Mammary epithelial cell (primary cell): ENCODE measurements at regions of chr22 and their contacts with region 1.

Region 1: GRCh38 chr22:24994070-24994763 is 41.7 kb downstream of the KIAA1671 start:
- DNase-seq: peak; percentile 97
- H3K4me3 ChIP-seq: no peak overlapping the region
- H3K27ac ChIP-seq: peak overlapping the region; percentile 85
- H3K4me1 ChIP-seq: peaks cover 68% of the 10 kb centered on the region
- H3K27me3 ChIP-seq: no peaks in the 10 kb centered on the region
- CTCF ChIP-seq: peak; percentile 26 to 68

Region 2: DNA sequence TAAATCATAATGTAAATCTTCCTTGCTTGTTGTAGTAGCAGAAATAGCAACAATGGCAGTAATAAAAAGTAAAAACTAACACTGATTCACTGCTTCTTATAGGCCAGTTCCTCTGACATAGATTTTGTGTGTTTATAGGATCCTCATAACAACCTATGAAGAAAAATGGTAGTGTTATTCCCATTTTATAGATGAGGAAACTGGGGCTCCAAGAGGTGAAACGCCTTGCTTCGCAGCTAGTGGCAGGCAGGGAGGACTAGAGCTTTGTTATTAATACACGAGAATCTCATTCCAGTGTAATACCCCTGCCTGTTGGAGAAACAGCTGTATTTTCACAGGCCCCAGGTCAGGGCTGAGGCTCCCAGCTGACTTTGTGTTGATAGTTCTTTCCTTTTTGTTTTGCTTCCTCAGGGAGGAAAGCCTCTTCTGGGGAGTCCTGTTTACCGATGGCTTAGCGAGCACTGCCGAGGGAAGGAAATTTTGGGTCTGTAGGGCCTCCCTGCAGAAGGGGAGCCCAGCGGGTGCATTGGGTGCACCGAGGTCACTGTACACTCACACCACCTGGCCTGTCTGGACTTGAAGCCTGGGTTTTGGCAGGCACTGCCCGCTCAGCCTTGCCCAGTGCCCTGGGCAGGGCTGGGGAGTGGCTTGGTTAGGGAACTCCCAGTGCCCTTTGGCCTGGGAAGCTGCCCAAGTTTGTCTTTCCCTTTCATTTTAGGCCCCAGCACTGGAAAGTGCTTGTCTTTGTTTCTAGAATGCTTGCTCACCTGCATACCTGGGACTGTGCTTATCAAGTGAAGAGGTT is 28.2 kb before region 1 on chr22:
- CTCF ChIA-PET with region 1: no interaction called
- dilution Hi-C with region 1: no loop called
- in situ Hi-C with region 1: no loop called
- intact Hi-C with region 1: loop called (anchors 1 kb)
- DNase-seq: peak; percentile 92
- H3K4me3 ChIP-seq: peak overlapping the region in 1 of 3 experiments; percentile 6
- H3K27ac ChIP-seq: peak overlapping the region; percentile 54
- H3K4me1 ChIP-seq: peaks cover 59% of the 10 kb centered on the region
- H3K27me3 ChIP-seq: no peaks in the 10 kb centered on the region
- CTCF ChIP-seq: no peak

Region 3: DNA sequence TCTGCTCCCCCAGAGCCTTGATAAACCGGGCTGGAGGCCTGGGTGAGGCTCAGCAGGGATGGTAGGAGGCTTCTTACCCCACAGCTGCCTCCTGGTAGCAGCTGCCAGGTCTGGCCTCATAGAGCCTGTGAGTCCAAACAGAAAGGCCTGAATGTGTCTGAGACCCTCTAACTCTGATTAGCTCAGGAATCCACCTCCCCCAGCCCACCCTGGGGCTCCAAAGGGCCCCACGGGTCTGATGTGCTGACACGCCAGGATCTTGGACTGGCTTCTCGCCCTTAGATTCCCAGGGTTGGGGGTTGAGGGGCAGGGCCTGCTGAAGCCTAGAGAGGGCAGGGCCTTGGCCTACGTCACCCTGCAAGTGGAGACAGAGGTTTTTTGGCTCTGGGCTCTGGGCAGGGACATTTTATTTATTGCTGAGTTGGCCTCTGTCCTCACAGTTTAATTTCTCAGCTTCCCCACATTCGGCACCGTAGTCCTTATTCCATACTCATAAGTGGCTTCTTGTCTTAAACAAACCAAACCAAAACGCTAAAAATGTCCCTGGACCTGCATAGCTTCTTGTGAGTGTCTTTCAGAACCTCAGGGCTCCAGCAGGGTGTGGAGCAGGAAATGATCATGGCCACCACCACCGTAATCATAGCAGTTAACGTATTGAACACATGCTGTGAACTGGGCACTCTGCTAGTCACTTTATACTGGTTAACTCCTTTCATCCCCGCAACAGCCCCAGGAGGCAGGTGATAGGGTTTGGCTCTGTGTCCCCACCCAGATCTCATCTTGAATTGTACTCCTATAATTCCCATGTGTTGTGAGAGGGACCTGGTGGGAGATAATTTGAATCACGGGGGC is 16.6 kb before region 1 on chr22:
- CTCF ChIA-PET with region 1: no interaction called
- dilution Hi-C with region 1: no loop called
- in situ Hi-C with region 1: no loop called
- intact Hi-C with region 1: loop called (anchors 2 kb)
- DNase-seq: no peak
- H3K4me3 ChIP-seq: no peak overlapping the region
- H3K27ac ChIP-seq: peak overlapping the region; percentile 89
- H3K4me1 ChIP-seq: peaks cover 38% of the 10 kb centered on the region
- H3K27me3 ChIP-seq: no peaks in the 10 kb centered on the region
- CTCF ChIP-seq: no peak

Region 4: GRCh38 chr22:25013607-25014006 is 19.4 kb after region 1 on chr22:
- CTCF ChIA-PET with region 1: interaction called, 4 read pairs
- dilution Hi-C with region 1: no loop called
- in situ Hi-C with region 1: no loop called
- intact Hi-C with region 1: loop called (anchors 2 kb)
- DNase-seq: peak; percentile 52
- H3K4me3 ChIP-seq: no peak overlapping the region
- H3K27ac ChIP-seq: no peak overlapping the region
- H3K4me1 ChIP-seq: peaks cover 4% of the 10 kb centered on the region
- H3K27me3 ChIP-seq: no peaks in the 10 kb centered on the region
- CTCF ChIP-seq: no peak

Region 5: GRCh38 chr22:25027959-25028840 is 34.0 kb after region 1 on chr22:
- CTCF ChIA-PET with region 1: no interaction called
- dilution Hi-C with region 1: no loop called
- in situ Hi-C with region 1: no loop called
- intact Hi-C with region 1: loop called (anchors 1 kb)
- DNase-seq: no peak
- H3K4me3 ChIP-seq: no peak overlapping the region
- H3K27ac ChIP-seq: no peak overlapping the region
- H3K4me1 ChIP-seq: peaks cover 33% of the 10 kb centered on the region
- H3K27me3 ChIP-seq: no peaks in the 10 kb centered on the region
- CTCF ChIP-seq: peak; percentile 25 to 60

Region 6: DNA sequence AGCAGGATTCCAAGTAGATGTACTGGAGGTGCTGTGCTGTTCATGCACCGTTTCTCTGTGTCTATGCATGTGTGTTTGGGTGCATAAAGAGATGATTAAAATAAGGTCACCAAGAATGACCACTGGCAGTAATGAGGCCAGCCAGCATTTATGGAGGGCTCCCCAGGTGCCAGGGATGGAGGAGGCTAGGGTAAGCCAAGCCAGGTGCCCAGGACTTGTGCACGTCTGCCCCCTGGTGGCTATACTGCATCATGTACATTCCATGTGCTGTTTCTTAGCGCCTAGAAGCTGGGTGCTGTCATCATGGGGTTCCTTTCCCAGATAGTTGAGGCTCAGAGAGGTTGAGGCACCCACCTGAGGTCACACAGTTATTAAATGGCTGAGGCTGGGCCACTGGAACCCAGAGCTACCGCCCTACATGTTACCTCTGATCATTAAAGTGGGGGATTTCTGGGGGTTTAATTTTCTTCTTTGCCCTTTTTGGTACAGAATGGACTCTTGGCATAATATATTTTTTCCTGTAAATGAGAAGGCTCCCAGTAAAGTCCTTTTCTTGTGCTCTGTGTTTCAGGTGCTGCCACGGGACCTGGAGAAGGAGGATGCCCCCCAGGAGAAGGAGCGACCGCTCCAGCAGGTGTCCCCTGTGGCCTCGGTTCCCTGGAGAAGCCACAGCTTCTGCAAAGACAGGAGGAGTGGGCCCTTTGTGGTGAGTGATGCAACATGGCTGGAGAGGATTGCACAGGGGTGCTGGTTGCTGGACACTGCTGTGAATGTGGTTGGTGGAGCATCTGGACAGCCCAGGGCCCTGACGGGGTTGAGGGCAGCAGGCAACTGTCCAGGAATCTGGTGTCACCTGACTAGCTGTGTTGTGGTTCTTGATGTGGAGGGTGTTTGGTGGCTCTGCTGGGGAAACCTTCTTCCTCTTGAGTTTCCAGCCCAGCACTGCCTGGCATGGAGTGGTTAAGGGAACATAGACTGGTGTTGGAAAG is 54.7 kb after region 1 on chr22:
- CTCF ChIA-PET with region 1: no interaction called
- dilution Hi-C with region 1: no loop called
- in situ Hi-C with region 1: no loop called
- intact Hi-C with region 1: loop called (anchors 1 kb)
- DNase-seq: peak; percentile 45
- H3K4me3 ChIP-seq: no peak overlapping the region
- H3K27ac ChIP-seq: no peak overlapping the region
- H3K4me1 ChIP-seq: no peaks in the 10 kb centered on the region
- H3K27me3 ChIP-seq: no peaks in the 10 kb centered on the region
- CTCF ChIP-seq: peak; percentile 84 to 94

Region 7: GRCh38 chr22:25100948-25101347 is 106.7 kb after region 1 on chr22:
- CTCF ChIA-PET with region 1: no interaction called
- dilution Hi-C with region 1: no loop called
- in situ Hi-C with region 1: no loop called
- intact Hi-C with region 1: no loop called
- DNase-seq: no peak
- H3K4me3 ChIP-seq: no peak overlapping the region
- H3K27ac ChIP-seq: no peak overlapping the region
- H3K4me1 ChIP-seq: peaks cover 8% of the 10 kb centered on the region
- H3K27me3 ChIP-seq: no peaks in the 10 kb centered on the region
- CTCF ChIP-seq: no peak